Sigmoid colon (tissue), 7 donors: ENCODE measurements at regions of chr7 and their contacts with region 1.

Region 1: GRCh38 chr7:95916573-95917297 is 144.4 kb downstream of the DYNC1I1 start:
- DNase-seq: peak; percentile 81
- H3K4me3 ChIP-seq: peak overlapping the region in 3 of 4 donors; percentile 5 to 25 (median 10)
- H3K27ac ChIP-seq: no peak overlapping the region
- H3K4me1 ChIP-seq: peaks cover 0 to 8% (median 2%) of the 10 kb centered on the region in 4 donors
- H3K27me3 ChIP-seq: no peaks in the 10 kb centered on the region
- CTCF ChIP-seq: peak; percentile 53 to 93 (median 74)
- EP300 ChIP-seq: no peak
- POLR2A ChIP-seq: no peak

Region 2: GRCh38 chr7:96075510-96076349 is 159.0 kb after region 1 on chr7:
- intact Hi-C with region 1: loop called (anchors 10 kb)
- DNase-seq: peak; percentile 72
- H3K4me3 ChIP-seq: peak overlapping the region; percentile 37 to 53 (median 48)
- H3K27ac ChIP-seq: no peak overlapping the region
- H3K4me1 ChIP-seq: peaks cover 0 to 7% (median 5%) of the 10 kb centered on the region in 4 donors
- H3K27me3 ChIP-seq: peaks cover 0 to 6% (median 0%) of the 10 kb centered on the region in 3 donors
- CTCF ChIP-seq: peak; percentile 9 to 73 (median 64)
- EP300 ChIP-seq: no peak
- POLR2A ChIP-seq: no peak

Region 3: GRCh38 chr7:96720843-96721242 is 804.1 kb after region 1 on chr7:
- intact Hi-C with region 1: no loop called
- DNase-seq: no peak
- H3K4me3 ChIP-seq: no peak overlapping the region
- H3K27ac ChIP-seq: no peak overlapping the region
- H3K4me1 ChIP-seq: no peaks in the 10 kb centered on the region
- H3K27me3 ChIP-seq: peaks cover 0 to 15% (median 0%) of the 10 kb centered on the region in 3 donors
- CTCF ChIP-seq: no peak
- EP300 ChIP-seq: no peak
- POLR2A ChIP-seq: no peak

Region 4: DNA sequence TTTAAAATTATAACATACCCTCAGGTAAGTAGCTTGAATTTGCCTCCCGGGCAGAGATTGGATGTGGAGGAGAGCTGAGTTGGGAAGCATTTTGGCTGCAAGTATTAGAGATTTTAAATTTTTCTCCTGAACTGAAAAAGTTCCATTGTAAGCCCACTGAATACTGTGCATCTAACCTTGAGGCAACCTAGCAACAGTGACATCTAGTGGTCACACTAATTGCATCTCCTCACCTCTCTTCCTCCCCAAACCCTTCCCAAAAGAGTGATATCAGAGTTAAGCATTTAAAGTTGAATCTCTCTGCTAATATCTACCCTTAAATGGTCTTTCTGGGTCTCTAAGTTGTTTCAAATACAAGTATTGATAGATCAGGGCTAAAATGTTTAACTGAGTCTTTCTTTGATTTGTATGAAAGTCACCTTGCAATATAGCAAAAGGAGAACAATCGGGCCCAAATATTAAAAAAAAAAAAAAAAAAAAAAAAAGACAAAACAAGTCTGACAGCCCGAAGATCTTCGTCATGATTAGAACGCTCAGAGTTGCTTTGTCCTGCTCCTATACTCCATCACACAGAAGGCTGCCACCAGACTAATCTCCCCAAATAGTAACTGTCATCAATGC is 1148.3 kb after region 1 on chr7:
- intact Hi-C with region 1: loop called (anchors 10 kb)
- DNase-seq: no peak
- H3K4me3 ChIP-seq: no peak overlapping the region
- H3K27ac ChIP-seq: no peak overlapping the region
- H3K4me1 ChIP-seq: no peaks in the 10 kb centered on the region
- H3K27me3 ChIP-seq: no peaks in the 10 kb centered on the region
- CTCF ChIP-seq: peak; percentile 14 to 71 (median 18)
- EP300 ChIP-seq: no peak
- POLR2A ChIP-seq: no peak